Aorta (tissue), 5 donors: ENCODE measurements at regions of chr7 and their contacts with region 1.

Region 1: GRCh38 chr7:38660427-38661099 is 29.4 kb upstream of the AMPH start:
- DNase-seq: no peak
- ATAC-seq: peak; percentile 72
- H3K4me3 ChIP-seq: no peak overlapping the region
- H3K27ac ChIP-seq: no peak overlapping the region
- H3K4me1 ChIP-seq: no peaks in the 10 kb centered on the region
- H3K27me3 ChIP-seq: no peaks in the 10 kb centered on the region

Region 2: GRCh38 chr7:38398725-38399321 is 261.7 kb before region 1 on chr7:
- intact Hi-C with region 1: loop called (anchors 5 kb)
- DNase-seq: peak; percentile 52 to 81
- ATAC-seq: peak; percentile 78
- H3K4me3 ChIP-seq: no peak overlapping the region
- H3K27ac ChIP-seq: no peak overlapping the region
- H3K4me1 ChIP-seq: no peaks in the 10 kb centered on the region
- H3K27me3 ChIP-seq: no peaks in the 10 kb centered on the region

Region 3: GRCh38 chr7:38451840-38452239 is 208.7 kb before region 1 on chr7:
- intact Hi-C with region 1: loop called in 1 of 2 experiments (anchors 10 kb)
- DNase-seq: no peak
- ATAC-seq: no peak
- H3K4me3 ChIP-seq: no peak overlapping the region
- H3K27ac ChIP-seq: no peak overlapping the region
- H3K4me1 ChIP-seq: peaks cover 0 to 5% of the 10 kb centered on the region in 2 donors
- H3K27me3 ChIP-seq: no peaks in the 10 kb centered on the region

Region 4: DNA sequence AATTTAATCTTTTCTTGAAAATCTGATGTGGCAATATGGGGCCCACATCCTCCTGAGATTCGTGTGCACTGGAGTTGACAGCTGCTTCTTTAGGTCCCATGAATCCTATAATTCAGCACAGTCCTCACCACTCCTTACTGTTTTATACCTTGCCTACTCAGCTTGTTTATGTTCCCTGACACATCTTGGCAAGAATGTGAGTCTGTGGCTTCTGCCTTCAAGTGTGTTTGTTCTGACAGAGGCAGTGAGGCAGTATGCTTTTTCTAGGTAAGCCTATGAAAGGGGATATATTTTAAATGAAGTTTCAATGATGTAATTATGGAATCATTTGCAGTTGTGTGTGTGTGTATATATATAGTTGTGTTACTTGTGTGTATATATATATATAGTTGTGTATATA is 135.8 kb before region 1 on chr7:
- intact Hi-C with region 1: loop called in 1 of 2 experiments (anchors 10 kb)
- DNase-seq: no peak
- ATAC-seq: no peak
- H3K4me3 ChIP-seq: no peak overlapping the region
- H3K27ac ChIP-seq: no peak overlapping the region
- H3K4me1 ChIP-seq: no peaks in the 10 kb centered on the region
- H3K27me3 ChIP-seq: no peaks in the 10 kb centered on the region

Region 5: DNA sequence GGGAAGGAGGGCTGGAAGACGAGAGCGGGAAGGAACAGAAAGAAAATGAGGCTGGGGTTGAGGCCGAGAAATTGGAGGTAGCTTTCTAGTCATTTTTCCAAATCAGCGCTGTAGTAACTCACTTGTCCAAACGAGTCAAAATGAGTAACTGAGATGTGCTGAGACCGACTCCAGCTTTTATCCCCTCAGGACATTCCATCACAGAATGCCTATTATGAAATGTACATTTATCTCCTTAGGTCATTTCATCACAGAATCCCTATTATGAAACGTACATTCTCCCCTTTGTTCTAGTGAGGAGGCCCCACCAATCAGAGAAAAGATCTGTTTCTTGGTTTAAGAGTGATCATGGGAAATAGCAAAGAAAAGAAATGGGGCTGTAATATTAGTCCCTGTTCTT is 26.3 kb after region 1 on chr7:
- intact Hi-C with region 1: no loop called
- DNase-seq: no peak
- ATAC-seq: no peak
- H3K4me3 ChIP-seq: no peak overlapping the region
- H3K27ac ChIP-seq: no peak overlapping the region
- H3K4me1 ChIP-seq: no peaks in the 10 kb centered on the region
- H3K27me3 ChIP-seq: no peaks in the 10 kb centered on the region